ENCODE measurements at regions of chr5 and their contacts with region 1.

Region 1: GRCh38 chr5:39424736-39425637 is at the start of gene DAB2:
- DNase-seq: peak; percentile 81
- H3K4me3 Mint-ChIP-seq: peak within 1 kb of the TSS; percentile 89
- H3K27ac Mint-ChIP-seq: peak within 1 kb of the TSS; percentile 53
- H3K4me1 Mint-ChIP-seq: peaks cover 36% of the 10 kb centered on the region
- H3K27me3 Mint-ChIP-seq: no peaks in the 10 kb centered on the region
- CTCF ChIP-seq: peak; percentile 70
- total RNA-seq, gene DAB2: 9.5 and 12.4 TPM in 2 replicates

Region 2: GRCh38 chr5:38845526-38846378 is 579.2 kb before region 1 on chr5 and contains the start of gene OSMR:
- CTCF ChIA-PET with region 1: no interaction called
- intact Hi-C with region 1: loop called (anchors 5 kb)
- DNase-seq: peak; percentile 93
- H3K4me3 Mint-ChIP-seq: peak within 1 kb of the TSS; percentile 89
- H3K27ac Mint-ChIP-seq: peak within 1 kb of the TSS; percentile 94
- H3K4me1 Mint-ChIP-seq: peaks cover 26% of the 10 kb centered on the region
- H3K27me3 Mint-ChIP-seq: no peaks in the 10 kb centered on the region
- CTCF ChIP-seq: peak; percentile 12
- total RNA-seq, gene OSMR: 59.8 and 76.4 TPM in 2 replicates

Region 3: GRCh38 chr5:39231705-39232525 is 193.1 kb before region 1 on chr5:
- CTCF ChIA-PET with region 1: no interaction called
- intact Hi-C with region 1: no loop called
- DNase-seq: peak; percentile 37
- H3K4me3 Mint-ChIP-seq: no peak overlapping the region
- H3K27ac Mint-ChIP-seq: peak overlapping the region; percentile 45
- H3K4me1 Mint-ChIP-seq: peaks cover 15% of the 10 kb centered on the region
- H3K27me3 Mint-ChIP-seq: no peaks in the 10 kb centered on the region
- CTCF ChIP-seq: no peak

Region 4: DNA sequence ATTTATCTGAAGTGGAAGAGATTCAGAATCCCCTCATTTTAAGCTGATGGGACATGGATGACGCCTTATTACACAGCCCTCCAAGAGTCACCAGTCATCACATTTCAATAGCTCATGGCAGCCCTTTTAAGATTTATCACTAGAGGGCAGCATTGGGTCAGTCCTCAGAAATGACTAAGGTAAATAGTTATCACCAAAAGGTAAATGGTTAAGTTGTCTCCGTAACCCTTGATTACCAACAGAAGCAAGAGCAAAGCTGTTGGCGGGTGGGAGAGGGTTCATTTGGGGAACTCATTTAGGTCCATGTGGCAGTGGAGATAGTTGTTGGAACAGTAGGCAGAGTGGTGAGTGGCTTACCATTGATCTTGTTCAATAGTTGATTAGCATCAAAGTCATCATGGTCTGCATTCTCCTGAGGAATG is 48.7 kb before region 1 on chr5:
- CTCF ChIA-PET with region 1: interaction called, 14 read pairs
- intact Hi-C with region 1: no loop called
- DNase-seq: peak; percentile 64
- H3K4me3 Mint-ChIP-seq: no peak overlapping the region
- H3K27ac Mint-ChIP-seq: no peak overlapping the region
- H3K4me1 Mint-ChIP-seq: peaks cover 39% of the 10 kb centered on the region
- H3K27me3 Mint-ChIP-seq: no peaks in the 10 kb centered on the region
- CTCF ChIP-seq: peak; percentile 73

Region 5: DNA sequence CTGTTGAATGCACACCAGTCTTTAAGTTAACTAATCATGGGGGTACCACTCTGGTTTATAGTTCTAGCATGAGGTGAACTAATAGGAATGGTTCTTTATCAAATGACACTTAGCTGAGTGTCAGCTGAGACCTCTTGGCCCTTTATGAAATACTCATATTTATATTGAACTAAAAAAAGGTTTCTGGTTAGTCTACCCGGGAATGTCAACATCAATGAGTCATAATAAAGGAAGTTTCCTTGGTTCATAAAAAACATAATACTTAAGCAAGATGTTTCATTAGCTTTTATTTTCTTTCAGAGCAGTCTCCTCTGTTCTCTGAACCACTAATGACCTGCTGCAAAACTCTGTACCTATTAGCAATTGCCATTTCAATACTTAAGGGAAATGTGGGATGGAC is 13.9 kb before region 1 on chr5:
- CTCF ChIA-PET with region 1: interaction called, 12 read pairs
- intact Hi-C with region 1: no loop called
- DNase-seq: no peak
- H3K4me3 Mint-ChIP-seq: no peak overlapping the region
- H3K27ac Mint-ChIP-seq: no peak overlapping the region
- H3K4me1 Mint-ChIP-seq: peaks cover 19% of the 10 kb centered on the region
- H3K27me3 Mint-ChIP-seq: no peaks in the 10 kb centered on the region
- CTCF ChIP-seq: no peak

Region 6: GRCh38 chr5:39547553-39548154 is 122.7 kb after region 1 on chr5:
- CTCF ChIA-PET with region 1: interaction called, 31 read pairs
- intact Hi-C with region 1: loop called (anchors 1 kb)
- DNase-seq: peak; percentile 49
- H3K4me3 Mint-ChIP-seq: no peak overlapping the region
- H3K27ac Mint-ChIP-seq: no peak overlapping the region
- H3K4me1 Mint-ChIP-seq: peaks cover 10% of the 10 kb centered on the region
- H3K27me3 Mint-ChIP-seq: no peaks in the 10 kb centered on the region
- CTCF ChIP-seq: peak; percentile 59